ENCODE measurements at regions of chr7 and their contacts with region 1.

Region 1: DNA sequence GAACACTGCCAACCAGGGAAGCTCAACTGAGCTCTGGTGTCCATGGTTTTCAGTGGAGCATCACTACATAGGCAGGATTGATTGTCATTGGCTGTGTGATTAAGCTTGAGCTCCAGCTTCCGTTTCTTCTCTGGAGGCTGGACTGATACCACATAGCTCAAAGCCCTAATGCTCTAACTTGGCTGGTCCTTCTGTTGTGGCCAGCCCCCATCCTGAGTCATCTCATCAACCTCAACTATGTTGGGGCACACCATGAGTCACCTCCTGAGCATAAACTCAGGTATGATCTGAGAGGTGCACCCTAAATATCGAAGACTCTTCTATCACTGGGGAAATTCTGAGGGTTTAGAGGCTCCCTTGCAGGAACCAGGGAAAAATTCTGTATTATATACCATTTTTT is 114.5 kb upstream of the INHBA start:
- DNase-seq: no peak
- H3K4me3 Mint-ChIP-seq: no peak overlapping the region
- H3K27ac Mint-ChIP-seq: no peak overlapping the region
- H3K4me1 Mint-ChIP-seq: peaks cover 42% of the 10 kb centered on the region
- H3K27me3 Mint-ChIP-seq: peaks cover 18% of the 10 kb centered on the region

Region 2: DNA sequence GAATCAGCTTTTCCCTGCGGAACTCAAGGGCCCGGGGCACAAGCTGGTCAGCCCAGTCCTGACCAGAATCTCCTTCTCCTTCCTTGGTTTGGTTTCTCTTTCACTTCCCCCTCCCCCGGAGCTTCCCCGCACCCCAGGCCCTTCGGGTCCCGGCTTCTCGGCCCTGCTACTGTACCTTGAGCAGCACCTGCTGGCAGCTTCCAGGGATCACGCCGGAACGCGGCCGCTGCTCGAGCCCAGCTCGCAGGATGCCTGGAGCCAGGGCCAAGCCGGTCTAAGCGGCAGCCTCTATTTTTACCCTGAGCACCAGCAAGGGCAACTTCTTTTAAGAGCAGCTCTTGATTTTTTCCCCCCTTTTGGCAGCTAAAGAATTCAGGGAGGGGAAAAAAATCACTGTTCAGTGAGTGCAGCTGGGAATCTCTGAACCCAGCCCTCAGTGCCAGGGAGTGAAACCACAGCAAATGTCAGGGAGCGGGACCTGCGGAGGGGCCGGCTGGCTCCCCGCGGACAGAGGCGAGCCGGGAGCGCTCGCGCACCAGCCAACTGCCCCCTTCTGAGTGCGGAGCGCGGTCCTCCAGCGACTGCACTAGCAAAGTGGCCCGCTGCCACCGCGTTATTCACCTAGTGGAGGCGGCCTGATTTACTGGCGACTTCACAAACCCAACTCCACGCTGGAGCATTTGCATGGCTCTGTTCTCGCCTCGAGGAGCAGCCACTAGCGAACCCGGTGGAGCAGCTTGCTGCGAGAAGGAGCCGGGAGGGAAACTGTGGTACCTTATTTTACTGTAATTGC is 112.1 kb before region 1 on chr7:
- intact Hi-C with region 1: loop called (anchors 10 kb)
- DNase-seq: peak; percentile 46
- H3K4me3 Mint-ChIP-seq: peak overlapping the region; percentile 74
- H3K27ac Mint-ChIP-seq: no peak overlapping the region
- H3K4me1 Mint-ChIP-seq: peaks cover 17% of the 10 kb centered on the region
- H3K27me3 Mint-ChIP-seq: peaks cover 45% of the 10 kb centered on the region

Region 3: GRCh38 chr7:41738806-41739205 is 78.6 kb before region 1 on chr7:
- intact Hi-C with region 1: loop called (anchors 5 kb)
- DNase-seq: no peak
- H3K4me3 Mint-ChIP-seq: no peak overlapping the region
- H3K27ac Mint-ChIP-seq: no peak overlapping the region
- H3K4me1 Mint-ChIP-seq: peaks cover 7% of the 10 kb centered on the region
- H3K27me3 Mint-ChIP-seq: peaks cover 15% of the 10 kb centered on the region

Region 4: DNA sequence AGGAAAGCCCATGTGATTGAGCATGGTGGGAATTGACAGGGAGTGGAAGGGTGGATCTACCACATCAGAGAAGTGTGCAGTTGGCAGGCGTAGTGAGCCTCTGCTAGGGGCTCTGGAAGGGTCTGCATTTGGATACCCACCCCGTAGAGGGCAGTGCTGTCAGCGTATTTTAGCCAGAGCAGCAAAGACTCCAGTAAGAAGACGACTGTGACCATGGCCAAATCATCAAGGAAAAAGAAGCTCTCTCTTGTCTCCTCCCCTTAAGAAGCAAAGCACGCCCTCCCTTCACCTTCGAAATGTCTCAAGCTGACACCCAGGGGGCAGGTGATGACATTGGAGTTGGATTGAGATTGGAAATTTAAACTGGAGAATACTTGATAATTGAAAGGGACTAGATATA is 45.6 kb before region 1 on chr7:
- intact Hi-C with region 1: no loop called
- DNase-seq: no peak
- H3K4me3 Mint-ChIP-seq: no peak overlapping the region
- H3K27ac Mint-ChIP-seq: no peak overlapping the region
- H3K4me1 Mint-ChIP-seq: no peaks in the 10 kb centered on the region
- H3K27me3 Mint-ChIP-seq: no peaks in the 10 kb centered on the region